Activated CD4-positive, alpha-beta memory T cell treated with anti-CD3 and anti-CD28 coated beads for 36 hours (primary cell): ENCODE measurements at regions of chr10 and their contacts with region 1.

Region 1: GRCh38 chr10:72331601-72332422 is 22.9 kb downstream of the DNAJB12 start:
- DNase-seq: peak; percentile 98
- H3K4me3 Mint-ChIP-seq: peak overlapping the region; percentile 63
- H3K27ac Mint-ChIP-seq: peak overlapping the region; percentile 99
- H3K4me1 Mint-ChIP-seq: peaks cover 85% of the 10 kb centered on the region
- H3K27me3 Mint-ChIP-seq: peaks cover 2% of the 10 kb centered on the region

Region 2: GRCh38 chr10:71727738-71728737 is 603.8 kb before region 1 on chr10:
- CTCF ChIA-PET with region 1: no interaction called
- POLR2A ChIA-PET with region 1: no interaction called
- intact Hi-C with region 1: loop called (anchors 10 kb)
- DNase-seq: peak; percentile 87
- H3K4me3 Mint-ChIP-seq: peak overlapping the region; percentile 58
- H3K27ac Mint-ChIP-seq: peak overlapping the region; percentile 99
- H3K4me1 Mint-ChIP-seq: peaks cover 95% of the 10 kb centered on the region
- H3K27me3 Mint-ChIP-seq: no peaks in the 10 kb centered on the region

Region 3: DNA sequence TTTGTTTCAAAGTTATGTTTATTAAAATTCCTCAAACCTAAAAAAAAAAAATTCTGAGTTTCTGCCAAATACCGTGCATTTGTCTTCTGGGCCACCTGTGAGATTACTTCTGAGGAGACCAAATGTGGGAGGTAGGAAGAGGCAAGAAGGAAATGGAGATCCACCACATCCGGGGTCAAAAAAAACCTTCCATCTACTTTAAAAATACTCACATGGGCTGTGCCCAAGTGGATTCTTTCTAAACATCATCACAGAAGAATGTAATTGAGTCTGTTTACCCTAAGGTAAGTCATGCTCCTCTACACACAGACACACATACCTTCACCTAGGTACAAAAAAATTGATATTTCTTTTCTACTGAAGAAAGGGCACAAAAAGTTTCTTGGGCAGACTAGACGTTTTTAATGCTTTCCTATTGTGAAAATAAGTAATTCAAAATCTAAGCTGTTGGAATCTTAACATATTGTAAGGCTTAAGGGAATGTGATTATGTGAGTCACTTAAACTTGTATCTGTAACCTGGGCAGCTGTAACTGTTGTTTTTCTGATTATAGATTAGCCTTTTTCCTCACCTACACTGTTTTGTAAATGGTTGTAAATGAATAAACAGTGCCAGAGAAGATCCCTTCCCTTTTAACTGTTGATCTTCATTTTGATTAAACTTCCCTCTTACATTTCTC is 224.3 kb before region 1 on chr10:
- CTCF ChIA-PET with region 1: interaction called, 6 read pairs
- POLR2A ChIA-PET with region 1: no interaction called
- intact Hi-C with region 1: loop called (anchors 5 kb)
- DNase-seq: no peak
- H3K4me3 Mint-ChIP-seq: peak overlapping the region; percentile 76
- H3K27ac Mint-ChIP-seq: peak overlapping the region; percentile 97
- H3K4me1 Mint-ChIP-seq: peaks cover 69% of the 10 kb centered on the region
- H3K27me3 Mint-ChIP-seq: no peaks in the 10 kb centered on the region

Region 4: DNA sequence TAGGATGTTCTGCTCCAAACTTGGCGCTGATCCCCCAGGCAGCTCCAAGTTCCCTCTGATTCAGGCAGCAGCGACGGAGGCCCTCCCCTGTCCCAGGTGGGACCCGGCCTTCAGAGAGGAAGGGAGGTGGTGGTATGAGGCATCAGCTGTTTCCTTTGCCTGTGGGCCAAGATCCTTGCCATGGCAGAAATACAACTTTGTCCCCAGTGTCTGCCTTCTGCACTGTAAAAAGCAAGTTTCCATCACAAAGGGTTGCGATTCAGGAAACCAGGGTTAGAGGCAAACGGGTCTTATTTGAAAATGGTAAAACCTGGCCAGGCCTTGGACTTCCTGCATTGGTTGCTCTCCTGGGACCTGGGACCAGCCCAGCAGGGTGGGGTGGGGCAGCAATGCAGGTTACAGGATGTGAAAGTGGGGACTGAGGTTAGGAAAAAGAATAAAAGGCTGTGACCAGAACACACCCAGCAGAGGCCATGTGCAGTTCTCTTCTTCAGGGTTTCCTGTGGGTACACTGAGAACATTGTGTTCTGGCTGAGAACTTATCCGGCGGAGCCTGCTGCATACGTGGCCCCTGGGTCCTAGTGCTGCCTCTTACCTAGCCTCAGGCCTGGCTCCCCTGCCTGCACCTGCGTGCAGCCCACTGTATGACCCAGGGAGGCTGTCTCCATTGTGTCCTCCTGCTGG is 83.2 kb before region 1 on chr10:
- CTCF ChIA-PET with region 1: interaction called, 21 read pairs
- POLR2A ChIA-PET with region 1: no interaction called
- intact Hi-C with region 1: loop called (anchors 2 kb)
- DNase-seq: peak; percentile 84
- H3K4me3 Mint-ChIP-seq: peak overlapping the region; percentile 83
- H3K27ac Mint-ChIP-seq: peak overlapping the region; percentile 98
- H3K4me1 Mint-ChIP-seq: peaks cover 74% of the 10 kb centered on the region
- H3K27me3 Mint-ChIP-seq: no peaks in the 10 kb centered on the region

Region 5: DNA sequence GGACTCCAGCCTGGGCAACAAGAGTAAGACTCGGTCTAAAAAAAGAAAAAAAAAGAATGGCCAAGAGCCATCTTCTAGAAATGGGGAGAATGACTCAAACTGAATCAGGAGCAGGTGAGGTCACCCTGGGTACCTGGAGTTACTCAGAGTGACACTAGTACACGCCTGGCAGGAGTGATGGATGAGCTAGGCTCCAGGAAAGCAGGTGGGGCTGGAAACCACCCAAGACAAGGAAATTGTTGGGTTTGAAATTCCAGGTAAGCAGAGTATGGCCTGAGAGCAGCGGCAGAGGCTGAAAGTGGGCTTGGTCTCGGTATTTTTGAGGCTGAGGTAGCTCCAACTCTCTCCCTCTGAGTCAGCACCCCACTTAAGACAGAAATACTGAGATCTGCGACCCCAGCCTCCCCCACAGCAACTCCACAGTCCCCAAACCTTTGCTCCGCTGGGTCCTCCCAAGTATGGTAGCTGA is 39.6 kb before region 1 on chr10:
- CTCF ChIA-PET with region 1: interaction called, 21 read pairs
- POLR2A ChIA-PET with region 1: interaction called, 80 read pairs
- intact Hi-C with region 1: loop called (anchors 1 kb)
- DNase-seq: peak; percentile 89
- H3K4me3 Mint-ChIP-seq: no peak overlapping the region
- H3K27ac Mint-ChIP-seq: peak overlapping the region; percentile 100
- H3K4me1 Mint-ChIP-seq: peaks cover 59% of the 10 kb centered on the region
- H3K27me3 Mint-ChIP-seq: peaks cover 3% of the 10 kb centered on the region

Region 6: DNA sequence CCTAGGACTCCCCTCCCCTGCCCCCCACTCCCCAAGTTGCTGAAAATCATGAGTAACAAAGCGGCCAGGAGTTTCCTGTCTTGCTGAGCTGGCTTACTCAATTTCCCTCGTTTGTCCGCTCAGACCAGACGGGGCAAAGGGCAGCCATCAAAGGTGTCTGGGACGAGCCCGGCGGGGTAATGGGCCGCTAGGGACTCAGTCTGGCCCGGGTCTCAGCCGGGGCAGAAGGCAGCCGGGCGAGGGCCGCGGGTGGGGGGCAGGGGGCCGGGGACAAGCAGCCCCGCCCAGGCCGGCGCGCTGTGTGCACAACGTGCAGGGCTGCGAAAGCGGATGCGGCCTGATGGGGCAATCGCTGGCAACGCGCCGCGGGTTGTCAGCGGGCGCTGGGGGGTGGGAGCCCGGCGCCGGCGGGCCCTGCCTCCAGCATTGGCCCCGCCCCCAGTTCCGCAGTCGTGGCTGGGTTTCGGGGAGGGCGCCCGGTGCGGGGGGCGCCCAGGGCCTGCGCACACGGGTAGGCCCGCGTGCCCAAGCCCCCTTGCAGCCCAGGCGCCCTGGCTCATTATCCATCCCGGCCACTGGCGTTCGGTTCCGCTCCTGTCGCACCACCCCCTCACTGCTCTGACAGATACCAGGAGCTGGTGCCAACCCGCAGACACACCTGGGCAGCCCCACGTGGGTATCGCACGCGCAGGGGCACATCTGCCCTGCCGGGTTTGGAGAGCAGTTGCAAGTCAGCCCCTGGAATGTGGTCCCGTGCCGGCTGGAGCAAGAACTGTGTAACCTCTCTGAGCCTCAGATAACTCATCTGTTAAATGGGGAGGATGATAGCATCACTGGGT is 12.2 kb before region 1 on chr10:
- CTCF ChIA-PET with region 1: interaction called, 67 read pairs
- POLR2A ChIA-PET with region 1: interaction called, 34 read pairs
- intact Hi-C with region 1: loop called (anchors 1 kb)
- DNase-seq: peak; percentile 93
- H3K4me3 Mint-ChIP-seq: peak overlapping the region; percentile 85
- H3K27ac Mint-ChIP-seq: peak overlapping the region; percentile 100
- H3K4me1 Mint-ChIP-seq: peaks cover 79% of the 10 kb centered on the region
- H3K27me3 Mint-ChIP-seq: no peaks in the 10 kb centered on the region